Esophagus muscularis mucosa (tissue), 4 donors: ENCODE measurements at regions of chr11 and their contacts with region 1.

Region 1: GRCh38 chr11:131504199-131504949 is 134.0 kb downstream of the NTM start:
- DNase-seq: no peak
- H3K4me3 ChIP-seq: no peak overlapping the region
- H3K27ac ChIP-seq: no peak overlapping the region
- H3K4me1 ChIP-seq: no peaks in the 10 kb centered on the region
- H3K27me3 ChIP-seq: peaks cover 0 to 7% (median 0%) of the 10 kb centered on the region in 4 donors
- CTCF ChIP-seq: no peak
- EP300 ChIP-seq: no peak
- POLR2A ChIP-seq: no peak

Region 2: DNA sequence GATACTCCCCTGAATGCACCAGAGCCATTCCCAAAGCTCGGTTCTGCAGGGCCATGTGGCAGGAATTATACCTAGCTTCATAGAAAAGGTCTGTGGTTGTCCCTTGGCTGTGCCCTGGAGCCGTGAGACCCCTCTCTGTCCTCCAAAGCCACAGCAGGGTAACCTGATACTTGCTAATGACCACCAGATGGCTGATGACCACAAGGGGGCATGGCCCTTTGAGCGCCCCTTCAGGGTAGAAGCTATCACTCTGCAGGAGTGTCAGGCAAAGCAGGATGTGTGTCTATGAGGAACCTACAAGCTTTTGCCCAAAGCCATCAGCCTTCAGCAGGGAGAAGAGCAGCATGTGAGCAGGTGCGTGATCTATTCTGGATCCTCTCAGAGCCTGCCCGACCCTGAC is 38.6 kb before region 1 on chr11:
- intact Hi-C with region 1: no loop called
- DNase-seq: no peak
- H3K4me3 ChIP-seq: no peak overlapping the region
- H3K27ac ChIP-seq: no peak overlapping the region
- H3K4me1 ChIP-seq: no peaks in the 10 kb centered on the region
- H3K27me3 ChIP-seq: peaks cover 0 to 51% (median 0%) of the 10 kb centered on the region in 4 donors
- CTCF ChIP-seq: no peak
- EP300 ChIP-seq: no peak
- POLR2A ChIP-seq: no peak

Region 3: GRCh38 chr11:131561501-131561900 is 57.1 kb after region 1 on chr11:
- intact Hi-C with region 1: loop called (anchors 10 kb)
- DNase-seq: no peak
- H3K4me3 ChIP-seq: no peak overlapping the region
- H3K27ac ChIP-seq: no peak overlapping the region
- H3K4me1 ChIP-seq: no peaks in the 10 kb centered on the region
- H3K27me3 ChIP-seq: peaks cover 0 to 5% (median 0%) of the 10 kb centered on the region in 4 donors
- CTCF ChIP-seq: no peak
- EP300 ChIP-seq: no peak
- POLR2A ChIP-seq: no peak